Colonic mucosa (tissue), 4 donors: ENCODE measurements at regions of chr2 and their contacts with region 1.

Region 1: GRCh38 chr2:110804915-110805314 is 72.5 kb downstream of the ACOXL start:
- DNase-seq: no peak
- H3K4me3 ChIP-seq: no peak overlapping the region
- H3K27ac ChIP-seq: no peak overlapping the region
- H3K4me1 ChIP-seq: no peaks in the 10 kb centered on the region
- H3K27me3 ChIP-seq: no peaks in the 10 kb centered on the region
- CTCF ChIP-seq: no peak

Region 2: DNA sequence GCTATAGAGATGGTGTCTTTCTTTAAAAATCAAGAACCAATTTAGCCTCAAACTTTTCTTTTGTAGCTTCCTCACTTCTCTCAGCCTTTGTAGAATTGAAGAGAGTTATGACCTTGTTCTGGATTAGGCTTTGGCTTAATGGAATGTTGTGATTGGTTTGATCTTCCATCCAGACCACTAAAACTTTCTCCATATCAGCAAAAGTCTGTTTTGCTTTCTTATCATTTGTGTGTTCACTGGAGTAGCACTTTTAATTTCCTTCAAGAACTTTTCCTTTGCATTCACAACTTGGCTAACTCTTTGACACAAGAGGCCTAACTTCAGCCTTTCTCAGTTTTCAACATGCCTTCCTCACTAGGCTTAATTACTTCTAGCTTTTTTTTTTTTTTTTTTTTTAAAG is 120.6 kb after region 1 on chr2:
- intact Hi-C with region 1: no loop called
- DNase-seq: no peak
- H3K4me3 ChIP-seq: no peak overlapping the region
- H3K27ac ChIP-seq: no peak overlapping the region
- H3K4me1 ChIP-seq: no peaks in the 10 kb centered on the region
- H3K27me3 ChIP-seq: no peaks in the 10 kb centered on the region
- CTCF ChIP-seq: no peak

Region 3: GRCh38 chr2:111049792-111050640 is 245.1 kb after region 1 on chr2:
- intact Hi-C with region 1: no loop called
- DNase-seq: peak; percentile 57
- H3K4me3 ChIP-seq: no peak overlapping the region
- H3K27ac ChIP-seq: no peak overlapping the region
- H3K4me1 ChIP-seq: no peaks in the 10 kb centered on the region
- H3K27me3 ChIP-seq: no peaks in the 10 kb centered on the region
- CTCF ChIP-seq: no peak

Region 4: GRCh38 chr2:111715987-111716904 is 911.3 kb after region 1 on chr2:
- intact Hi-C with region 1: loop called (anchors 10 kb)
- DNase-seq: no peak
- H3K4me3 ChIP-seq: no peak overlapping the region
- H3K27ac ChIP-seq: no peak overlapping the region
- H3K4me1 ChIP-seq: no peaks in the 10 kb centered on the region
- H3K27me3 ChIP-seq: no peaks in the 10 kb centered on the region
- CTCF ChIP-seq: no peak